K562 (cell line): ENCODE measurements at regions of chr18 and their contacts with region 1.

Region 1: GRCh38 chr18:8912348-8913326 is 189.9 kb upstream of the NDUFV2 start:
- DNase-seq: peak; percentile 68 to 91 (median 78)
- ATAC-seq: peak; percentile 98
- H3K4me3 ChIP-seq: no peak overlapping the region; the same call in 1 of the 2 replicates
- H3K27ac ChIP-seq: peak overlapping the region; percentile 91
- H3K4me1 ChIP-seq: peaks cover 8 to 20% of the 10 kb centered on the region in 2 experiments; a peak in 4 of 5 replicates
- H3K27me3 ChIP-seq: no peaks in the 10 kb centered on the region
- CTCF ChIP-seq: peak; percentile 14 to 39 (median 37); a peak in 4 of 6 replicates
- EP300 ChIP-seq: no peak
- POLR2A ChIP-seq: peak; percentile 49; the same call in 1 of the 2 replicates
- RAD21 ChIP-seq: peak; percentile 25 to 51

Region 2: GRCh38 chr18:8893628-8894231 is 18.9 kb before region 1 on chr18:
- CTCF ChIA-PET with region 1: no interaction called
- POLR2A ChIA-PET with region 1: interaction called, 4 read pairs
- in situ Hi-C with region 1: no loop called
- intact Hi-C with region 1: loop called (anchors 2 kb)
- DNase-seq: no peak
- ATAC-seq: peak; percentile 11; the same call in 2 of the 3 replicates
- H3K4me3 ChIP-seq: no peak overlapping the region
- H3K27ac ChIP-seq: peak overlapping the region; percentile 71
- H3K4me1 ChIP-seq: peaks cover 6 to 42% of the 10 kb centered on the region in 2 experiments; a peak in 4 of 5 replicates
- H3K27me3 ChIP-seq: no peaks in the 10 kb centered on the region
- CTCF ChIP-seq: no peak
- EP300 ChIP-seq: 0 out of 2 replicates have a peak, but pooled peaks have one; percentile 29
- POLR2A ChIP-seq: no peak
- RAD21 ChIP-seq: no peak

Region 3: DNA sequence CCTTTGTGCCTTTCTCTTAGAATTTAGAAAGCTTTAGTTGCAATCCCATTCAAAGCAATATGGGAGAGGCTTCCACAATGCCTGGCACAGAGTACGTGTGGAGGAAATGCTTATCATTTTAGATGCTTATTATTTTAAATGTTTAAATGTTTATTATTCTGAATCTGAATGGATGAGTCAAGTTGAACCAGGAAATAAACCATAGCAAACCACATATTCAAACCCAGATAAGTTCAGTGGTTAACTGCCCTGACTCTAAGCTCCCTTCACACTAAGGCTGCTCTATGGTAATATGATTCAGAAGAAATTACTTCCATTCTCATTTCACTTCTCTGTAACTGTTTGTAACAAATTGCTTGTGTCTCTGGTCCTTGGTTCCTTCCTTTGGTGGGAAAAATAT is 706.9 kb after region 1 on chr18:
- CTCF ChIA-PET with region 1: no interaction called
- POLR2A ChIA-PET with region 1: no interaction called
- in situ Hi-C with region 1: no loop called
- intact Hi-C with region 1: no loop called
- DNase-seq: no peak
- ATAC-seq: no peak
- H3K4me3 ChIP-seq: no peak overlapping the region
- H3K27ac ChIP-seq: no peak overlapping the region
- H3K4me1 ChIP-seq: peaks cover 12 to 21% of the 10 kb centered on the region in 2 experiments
- H3K27me3 ChIP-seq: no peaks in the 10 kb centered on the region
- CTCF ChIP-seq: no peak
- EP300 ChIP-seq: no peak
- POLR2A ChIP-seq: no peak
- RAD21 ChIP-seq: no peak